ENCODE measurements at regions of chr6 and their contacts with region 1.

Region 1: DNA sequence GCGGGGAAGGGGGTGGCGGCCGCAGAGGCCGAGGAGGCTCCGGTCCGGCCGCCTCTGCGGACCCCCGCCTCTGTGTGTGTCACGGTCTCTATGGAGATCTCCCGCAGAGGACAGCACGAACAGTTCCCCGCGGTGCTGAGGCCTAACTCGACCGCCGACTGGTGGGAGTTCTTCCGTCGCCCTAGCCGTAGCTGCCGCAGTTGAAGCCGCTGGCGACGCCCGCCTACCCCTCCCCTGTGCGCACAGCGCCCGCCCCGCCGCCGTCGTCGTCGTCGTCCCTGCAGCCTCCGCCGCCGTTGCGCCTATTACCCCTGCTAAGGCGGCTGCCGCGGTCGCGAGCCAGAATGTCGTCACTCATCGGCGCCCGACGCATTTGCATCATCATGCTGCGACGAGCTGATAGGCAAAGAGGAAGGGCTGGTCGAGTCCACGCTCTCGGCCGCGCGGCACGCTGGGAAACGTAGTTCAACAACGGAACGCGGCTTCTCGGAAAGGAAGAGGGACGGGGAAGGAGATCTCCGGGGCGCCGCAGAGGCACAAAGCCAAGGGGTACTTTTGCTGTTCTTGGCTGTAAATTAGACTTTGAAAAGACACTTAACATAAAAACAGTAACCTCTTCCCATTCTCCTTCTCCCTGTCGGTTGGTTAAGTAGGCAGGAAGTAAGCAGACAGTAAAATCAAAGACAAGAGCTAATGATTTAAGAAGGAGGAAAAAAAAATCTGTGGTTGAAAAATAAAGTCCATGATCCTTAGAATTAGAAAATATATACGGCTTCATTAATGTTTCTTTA is at the start of gene NUP153:
- DNase-seq: peak; percentile 100
- ATAC-seq: peak; percentile 85
- H3K4me3 Mint-ChIP-seq: peak within 1 kb of the TSS; percentile 84
- H3K27ac Mint-ChIP-seq: peak within 1 kb of the TSS; percentile 98
- H3K4me1 Mint-ChIP-seq: peaks cover 29% of the 10 kb centered on the region
- H3K27me3 Mint-ChIP-seq: no peaks in the 10 kb centered on the region
- CTCF ChIP-seq: no peak
- total RNA-seq, gene NUP153: 58.4 to 67.0 TPM (median 60.2 TPM) in 3 replicates

Region 2: GRCh38 chr6:17599885-17600526 is 106.8 kb before region 1 on chr6 and contains the start of gene FAM8A1:
- CTCF ChIA-PET with region 1: interaction called, 5 read pairs
- POLR2A ChIA-PET with region 1: interaction called, 10 read pairs
- DNase-seq: peak; percentile 97
- ATAC-seq: peak; percentile 93
- H3K4me3 Mint-ChIP-seq: peak within 1 kb of the TSS; percentile 74
- H3K27ac Mint-ChIP-seq: peak within 1 kb of the TSS; percentile 83
- H3K4me1 Mint-ChIP-seq: peaks cover 13% of the 10 kb centered on the region
- H3K27me3 Mint-ChIP-seq: no peaks in the 10 kb centered on the region
- CTCF ChIP-seq: no peak
- total RNA-seq, gene FAM8A1: 8.5 to 10.3 TPM (median 9.4 TPM) in 3 replicates

Region 3: DNA sequence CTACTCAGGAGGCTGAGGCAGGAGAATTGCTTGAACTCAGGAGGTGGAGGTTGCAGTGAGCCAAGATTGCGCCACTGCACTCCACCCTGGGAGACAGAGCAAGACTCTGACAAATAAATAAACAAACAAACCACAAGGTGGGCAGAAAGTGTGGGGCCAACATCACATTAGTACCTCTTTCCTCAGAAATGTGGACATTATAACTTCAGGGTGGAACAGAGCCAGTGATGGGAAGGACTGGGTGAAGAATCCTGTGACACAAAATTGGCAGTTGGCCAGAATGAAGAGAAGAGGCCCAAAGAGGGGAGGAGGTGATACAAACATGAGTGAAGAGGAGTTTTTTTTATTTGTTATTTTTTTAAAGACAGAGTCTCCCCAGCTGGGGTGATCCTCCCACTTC is 50.7 kb before region 1 on chr6:
- CTCF ChIA-PET with region 1: no interaction called
- POLR2A ChIA-PET with region 1: no interaction called
- DNase-seq: no peak
- ATAC-seq: no peak
- H3K4me3 Mint-ChIP-seq: no peak overlapping the region
- H3K27ac Mint-ChIP-seq: peak overlapping the region; percentile 53; the same call in 1 of the 2 replicates
- H3K4me1 Mint-ChIP-seq: no peaks in the 10 kb centered on the region
- H3K27me3 Mint-ChIP-seq: no peaks in the 10 kb centered on the region
- CTCF ChIP-seq: no peak

Measured in WTC11 (cell line).